Activated T-helper 1 cell treated with anti-CD3 and anti-CD28 coated beads, Interleukin-12 subunit alpha, Interleukin-12 subunit beta, Interleukin-2, Interleukin-4 antibody, amounts not matched to agents 30 ng/mL and 10 ng/mL and 1 ng/mL, durations not matched to agents 14 hours and 24 hours and 36 hours (primary cell): ENCODE measurements at regions of chr18 and their contacts with region 1.

Region 1: GRCh38 chr18:1585879-1586488 is 681.3 kb downstream of the ADCYAP1 start:
- DNase-seq: no peak
- H3K4me3 Mint-ChIP-seq: no peak overlapping the region
- H3K27ac Mint-ChIP-seq: no peak overlapping the region
- H3K4me1 Mint-ChIP-seq: no peaks in the 10 kb centered on the region
- H3K27me3 Mint-ChIP-seq: peaks cover 1% of the 10 kb centered on the region

Region 2: DNA sequence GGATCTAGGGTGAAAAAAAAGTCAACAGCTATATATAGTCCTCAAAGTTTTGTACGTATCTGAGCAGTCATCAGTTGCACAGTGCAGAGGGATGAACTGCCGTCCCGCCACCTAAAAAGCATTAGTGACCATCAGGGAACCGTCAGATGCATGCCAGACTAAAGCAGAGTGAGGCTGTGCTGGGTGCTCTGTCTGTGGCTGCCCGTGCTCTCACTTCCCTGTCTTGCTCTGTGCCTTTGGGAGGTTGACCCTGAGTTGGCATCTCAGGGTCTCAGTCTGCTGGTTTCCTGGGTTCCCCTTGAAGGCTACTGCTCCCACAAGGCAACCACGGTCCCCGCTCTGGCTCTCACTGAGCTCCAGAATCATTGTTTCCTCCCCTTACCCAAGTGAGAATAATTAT is 978.1 kb before region 1 on chr18:
- intact Hi-C with region 1: no loop called
- DNase-seq: no peak
- H3K4me3 Mint-ChIP-seq: no peak overlapping the region
- H3K27ac Mint-ChIP-seq: no peak overlapping the region
- H3K4me1 Mint-ChIP-seq: no peaks in the 10 kb centered on the region
- H3K27me3 Mint-ChIP-seq: peaks cover 7% of the 10 kb centered on the region

Region 3: DNA sequence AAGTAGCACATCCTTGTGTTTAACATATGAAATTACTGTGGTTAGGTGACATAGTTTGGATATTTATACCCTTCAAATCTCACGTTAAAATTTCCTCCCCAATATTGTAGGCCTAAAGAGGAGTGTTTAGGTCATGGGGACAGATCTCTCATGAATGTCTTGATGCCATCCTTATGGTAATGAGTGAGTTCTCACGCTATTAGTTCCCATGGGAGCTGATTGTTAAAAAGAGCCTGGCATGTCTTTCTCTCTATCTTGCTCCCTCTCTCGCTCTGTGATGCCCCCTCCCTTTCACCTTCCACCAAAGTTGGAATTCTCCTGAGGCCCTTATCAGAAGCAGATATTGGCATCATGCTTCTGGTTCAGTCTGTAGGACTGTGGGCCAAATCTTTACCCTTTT is 21.2 kb before region 1 on chr18:
- intact Hi-C with region 1: loop called (anchors 2 kb)
- DNase-seq: no peak
- H3K4me3 Mint-ChIP-seq: no peak overlapping the region
- H3K27ac Mint-ChIP-seq: no peak overlapping the region
- H3K4me1 Mint-ChIP-seq: no peaks in the 10 kb centered on the region
- H3K27me3 Mint-ChIP-seq: no peaks in the 10 kb centered on the region

Region 4: DNA sequence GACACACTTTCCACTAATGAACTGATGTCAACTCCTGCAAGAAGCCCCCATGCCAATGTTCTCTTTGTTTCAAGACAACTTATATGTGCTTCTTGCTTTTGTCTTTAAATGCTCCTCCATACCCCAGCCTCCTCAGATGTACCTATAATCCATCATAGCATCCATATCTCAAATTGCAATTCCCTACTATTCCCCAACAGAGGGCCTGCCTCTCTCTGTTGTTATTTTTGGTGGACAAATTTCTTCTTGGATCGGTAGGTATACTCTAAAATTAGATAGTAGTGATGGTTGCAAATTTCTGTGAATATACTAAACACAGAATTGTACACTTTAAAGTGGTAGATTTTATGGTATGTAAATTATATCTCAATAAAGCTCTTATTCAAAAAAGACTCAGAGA is 165.3 kb after region 1 on chr18:
- intact Hi-C with region 1: no loop called
- DNase-seq: no peak
- H3K4me3 Mint-ChIP-seq: no peak overlapping the region
- H3K27ac Mint-ChIP-seq: no peak overlapping the region
- H3K4me1 Mint-ChIP-seq: no peaks in the 10 kb centered on the region
- H3K27me3 Mint-ChIP-seq: no peaks in the 10 kb centered on the region